CD8-positive, alpha-beta T cell (primary cell): ENCODE measurements at regions of chr17 and their contacts with region 1.

Region 1: GRCh38 chr17:42577532-42578281 is at the start of gene PSMC3IP:
- DNase-seq: peak; percentile 73 to 94 (median 91)
- ATAC-seq: peak; percentile 91
- H3K4me3 ChIP-seq: peak within 1 kb of the TSS; percentile 97 to 98
- H3K4me3 Mint-ChIP-seq: peak within 1 kb of the TSS; percentile 99
- H3K27ac ChIP-seq: peak within 1 kb of the TSS; percentile 76 to 88
- H3K27ac Mint-ChIP-seq: peak within 1 kb of the TSS; percentile 94
- H3K4me1 ChIP-seq: peaks cover 15% of the 10 kb centered on the region
- H3K4me1 Mint-ChIP-seq: peaks cover 29% of the 10 kb centered on the region
- H3K27me3 ChIP-seq: no peaks in the 10 kb centered on the region
- H3K27me3 Mint-ChIP-seq: no peaks in the 10 kb centered on the region
- CTCF ChIP-seq: no peak
- total RNA-seq, gene PSMC3IP: 3.9 to 4.1 TPM

Region 2: GRCh38 chr17:40827746-40828453 is 1749.8 kb before region 1 on chr17:
- CTCF ChIA-PET with region 1: no interaction called
- POLR2A ChIA-PET with region 1: no interaction called
- intact Hi-C with region 1: no loop called
- DNase-seq: no peak
- ATAC-seq: no peak
- H3K4me3 ChIP-seq: no peak overlapping the region
- H3K4me3 Mint-ChIP-seq: no peak overlapping the region
- H3K27ac ChIP-seq: no peak overlapping the region
- H3K27ac Mint-ChIP-seq: no peak overlapping the region
- H3K4me1 ChIP-seq: no peaks in the 10 kb centered on the region
- H3K4me1 Mint-ChIP-seq: peaks cover 13% of the 10 kb centered on the region
- H3K27me3 ChIP-seq: no peaks in the 10 kb centered on the region
- H3K27me3 Mint-ChIP-seq: peaks cover 2% of the 10 kb centered on the region
- CTCF ChIP-seq: no peak

Region 3: DNA sequence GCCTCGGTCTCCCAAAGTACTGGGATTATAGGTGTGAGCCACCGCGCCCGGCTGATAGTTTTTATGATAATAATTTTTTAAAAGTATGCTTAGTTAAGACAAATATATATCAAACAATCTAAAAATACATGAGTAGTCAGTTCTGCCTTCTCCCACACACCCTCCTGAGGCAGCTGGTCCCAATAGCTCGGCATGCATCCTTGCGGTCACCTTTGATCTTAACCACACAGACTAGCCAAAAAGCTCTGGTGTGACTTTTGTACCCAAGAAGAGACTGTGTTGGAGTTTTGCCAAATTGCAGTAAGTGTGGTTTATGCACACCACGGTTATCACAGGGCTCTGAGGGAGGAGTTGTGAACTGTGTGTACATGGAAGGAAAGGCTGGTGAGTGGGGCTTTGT is 93.4 kb before region 1 on chr17:
- CTCF ChIA-PET with region 1: no interaction called
- POLR2A ChIA-PET with region 1: no interaction called
- intact Hi-C with region 1: no loop called
- DNase-seq: peak; percentile 37 to 96 (median 70)
- ATAC-seq: peak; percentile 91
- H3K4me3 ChIP-seq: peak overlapping the region in 1 of 2 experiments; percentile 6
- H3K4me3 Mint-ChIP-seq: peak overlapping the region; percentile 51
- H3K27ac ChIP-seq: no peak overlapping the region
- H3K27ac Mint-ChIP-seq: peak overlapping the region; percentile 45
- H3K4me1 ChIP-seq: peaks cover 30% of the 10 kb centered on the region
- H3K4me1 Mint-ChIP-seq: peaks cover 38% of the 10 kb centered on the region
- H3K27me3 ChIP-seq: no peaks in the 10 kb centered on the region
- H3K27me3 Mint-ChIP-seq: no peaks in the 10 kb centered on the region
- CTCF ChIP-seq: no peak

Region 4: DNA sequence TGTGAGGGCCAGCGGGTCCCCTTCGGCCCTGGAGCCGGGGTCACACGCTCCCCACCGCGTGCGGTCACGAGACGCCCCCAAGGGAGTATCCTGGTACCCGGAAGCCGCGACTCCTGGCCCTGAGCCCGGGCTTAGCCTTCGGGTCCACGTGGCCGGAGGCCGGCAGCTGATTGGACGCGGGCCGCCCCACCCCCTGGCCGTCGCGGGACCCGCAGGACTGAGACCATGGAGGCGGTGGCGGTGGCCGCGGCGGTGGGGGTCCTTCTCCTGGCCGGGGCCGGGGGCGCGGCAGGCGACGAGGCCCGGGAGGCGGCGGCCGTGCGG is 41.7 kb before region 1 on chr17 and contains the start of gene NAGLU:
- CTCF ChIA-PET with region 1: interaction called, 18 read pairs
- POLR2A ChIA-PET with region 1: interaction called, 3 read pairs
- intact Hi-C with region 1: loop called (anchors 2 to 5 kb)
- DNase-seq: peak; percentile 47 to 89 (median 76)
- ATAC-seq: peak; percentile 69
- H3K4me3 ChIP-seq: peak within 1 kb of the TSS; percentile 56 to 82
- H3K4me3 Mint-ChIP-seq: peak within 1 kb of the TSS; percentile 87
- H3K27ac ChIP-seq: peak within 1 kb of the TSS; percentile 33 to 71
- H3K27ac Mint-ChIP-seq: peak within 1 kb of the TSS; percentile 87
- H3K4me1 ChIP-seq: peaks cover 38% of the 10 kb centered on the region
- H3K4me1 Mint-ChIP-seq: peaks cover 42% of the 10 kb centered on the region
- H3K27me3 ChIP-seq: no peaks in the 10 kb centered on the region
- H3K27me3 Mint-ChIP-seq: no peaks in the 10 kb centered on the region
- CTCF ChIP-seq: no peak
- total RNA-seq, gene NAGLU: 7.4 TPM

Region 5: DNA sequence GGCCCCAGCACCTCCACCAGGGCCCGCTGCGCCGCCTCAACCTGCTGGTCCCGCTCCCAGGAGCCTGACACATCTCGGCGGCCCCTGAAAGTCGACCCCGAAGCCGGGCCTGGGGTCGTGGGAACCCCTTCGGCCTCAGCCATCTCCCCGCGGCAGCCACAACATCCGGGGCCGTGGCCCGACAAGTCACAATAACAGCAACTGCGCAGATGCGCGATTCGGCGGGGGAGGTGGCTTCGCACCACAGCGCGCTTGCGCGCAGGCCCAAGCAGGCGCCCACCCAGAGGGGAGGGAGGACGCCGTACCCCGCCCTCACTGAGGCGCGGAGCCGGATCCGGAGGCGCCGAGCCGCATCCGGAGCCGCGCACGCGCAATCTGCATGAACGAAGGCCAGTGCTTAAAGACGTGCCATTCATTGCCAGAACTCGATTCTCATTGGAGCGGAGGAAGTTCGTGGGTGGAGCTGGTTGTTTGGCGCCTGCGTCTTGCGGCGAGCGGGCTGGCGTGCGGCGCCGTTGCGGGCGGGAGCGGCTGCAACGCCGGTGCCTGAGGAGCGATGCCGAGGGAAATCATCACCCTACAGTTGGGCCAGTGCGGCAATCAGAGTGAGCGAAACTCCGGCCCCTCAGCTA is 31.6 kb after region 1 on chr17 and contains the starts of genes RETREG3 and TUBG1:
- CTCF ChIA-PET with region 1: interaction called, 15 read pairs
- POLR2A ChIA-PET with region 1: interaction called, 26 read pairs
- intact Hi-C with region 1: loop called (anchors 1 kb)
- DNase-seq: peak; percentile 98 to 100 (median 99)
- ATAC-seq: peak; percentile 92
- H3K4me3 ChIP-seq: peak within 1 kb of the TSS; percentile 90 to 94
- H3K4me3 Mint-ChIP-seq: peak within 1 kb of the TSS; percentile 100
- H3K27ac ChIP-seq: peak within 1 kb of the TSS; percentile 90 to 91
- H3K27ac Mint-ChIP-seq: peak within 1 kb of the TSS; percentile 99
- H3K4me1 ChIP-seq: peaks cover 39% of the 10 kb centered on the region
- H3K4me1 Mint-ChIP-seq: peaks cover 48% of the 10 kb centered on the region
- H3K27me3 ChIP-seq: no peaks in the 10 kb centered on the region
- H3K27me3 Mint-ChIP-seq: no peaks in the 10 kb centered on the region
- CTCF ChIP-seq: no peak
- total RNA-seq, gene RETREG3: 59.0 to 59.3 TPM
- total RNA-seq, gene TUBG1: 4.9 to 8.4 TPM

Region 6: DNA sequence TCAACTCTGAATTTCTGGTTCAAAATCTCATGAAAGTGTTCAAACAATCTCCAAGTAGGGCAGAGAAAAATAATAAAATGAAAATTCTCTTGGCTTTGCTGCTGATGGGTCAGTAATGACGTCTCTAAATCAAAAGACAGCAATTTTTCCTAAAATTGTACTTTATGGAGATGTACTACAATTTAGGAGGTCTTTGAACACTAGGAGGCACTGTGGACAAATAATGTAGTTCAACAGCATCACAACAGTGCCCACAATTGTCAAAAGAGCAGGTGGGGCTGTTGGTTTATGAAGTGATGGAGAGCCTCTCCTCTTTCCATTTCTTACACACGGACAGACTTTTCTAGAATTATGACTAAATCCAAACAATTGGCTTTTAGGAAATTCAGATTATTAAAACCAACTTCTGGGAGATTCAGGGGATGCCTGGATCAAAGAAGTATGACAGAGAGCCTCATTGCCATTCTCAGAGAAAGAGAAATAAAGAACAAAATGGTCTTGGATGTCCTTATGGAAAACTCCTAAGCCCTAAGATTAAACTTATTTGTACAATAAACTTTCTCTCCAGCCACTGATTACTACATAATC is 143.4 kb after region 1 on chr17:
- CTCF ChIA-PET with region 1: interaction called, 13 read pairs
- POLR2A ChIA-PET with region 1: interaction called, 6 read pairs
- intact Hi-C with region 1: loop called in 1 of 2 experiments (anchors 5 kb)
- DNase-seq: peak in 5 of 9 experiments; percentile 17 to 79 (median 41)
- ATAC-seq: peak; percentile 89
- H3K4me3 ChIP-seq: no peak overlapping the region
- H3K4me3 Mint-ChIP-seq: no peak overlapping the region
- H3K27ac ChIP-seq: no peak overlapping the region
- H3K27ac Mint-ChIP-seq: no peak overlapping the region
- H3K4me1 ChIP-seq: no peaks in the 10 kb centered on the region
- H3K4me1 Mint-ChIP-seq: no peaks in the 10 kb centered on the region
- H3K27me3 ChIP-seq: no peaks in the 10 kb centered on the region
- H3K27me3 Mint-ChIP-seq: no peaks in the 10 kb centered on the region
- CTCF ChIP-seq: peak; percentile 66

Region 7: DNA sequence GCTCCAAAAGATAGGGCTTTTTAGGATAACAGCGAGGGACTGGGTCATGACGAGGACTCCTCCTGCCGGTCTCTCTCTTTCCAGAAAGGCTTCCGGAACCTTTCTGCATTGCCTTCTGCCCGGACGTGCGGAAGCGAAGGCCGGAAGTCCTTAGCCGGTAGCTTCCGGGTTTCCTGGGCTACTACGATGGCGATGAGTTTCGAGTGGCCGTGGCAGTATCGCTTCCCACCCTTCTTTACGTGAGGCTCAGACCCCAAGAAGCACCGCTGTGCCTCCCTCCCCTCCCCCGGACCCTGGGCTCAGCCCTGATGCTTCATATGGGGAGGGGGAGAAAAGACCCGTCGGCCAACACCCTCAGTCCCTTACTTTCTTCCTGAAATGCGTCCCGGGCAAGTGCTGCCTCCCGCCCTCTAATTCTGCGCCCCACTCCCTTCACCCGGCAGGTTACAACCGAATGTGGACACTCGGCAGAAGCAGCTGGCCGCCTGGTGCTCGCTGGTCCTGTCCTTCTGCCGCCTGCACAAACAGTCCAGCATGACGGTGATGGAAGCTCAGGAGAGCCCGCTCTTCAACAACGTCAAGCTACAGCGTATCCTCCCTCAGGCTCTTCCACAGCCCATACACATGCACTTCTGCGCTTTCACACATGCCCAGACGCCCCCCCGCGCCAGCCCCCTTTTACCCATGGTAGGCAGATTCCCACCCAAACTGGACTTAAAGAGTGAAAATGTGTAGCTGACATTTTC is 195.8 kb after region 1 on chr17 and contains the start of gene VPS25:
- CTCF ChIA-PET with region 1: interaction called, 4 read pairs
- POLR2A ChIA-PET with region 1: interaction called, 4 read pairs
- intact Hi-C with region 1: loop called in 1 of 2 experiments (anchors 1 kb)
- DNase-seq: peak; percentile 39 to 90 (median 75)
- ATAC-seq: peak; percentile 94
- H3K4me3 ChIP-seq: peak within 1 kb of the TSS; percentile 87 to 99
- H3K4me3 Mint-ChIP-seq: peak within 1 kb of the TSS; percentile 99
- H3K27ac ChIP-seq: peak within 1 kb of the TSS; percentile 89 to 93
- H3K27ac Mint-ChIP-seq: peak within 1 kb of the TSS; percentile 98
- H3K4me1 ChIP-seq: peaks cover 11% of the 10 kb centered on the region
- H3K4me1 Mint-ChIP-seq: peaks cover 28% of the 10 kb centered on the region
- H3K27me3 ChIP-seq: no peaks in the 10 kb centered on the region
- H3K27me3 Mint-ChIP-seq: peaks cover under 1% of the 10 kb centered on the region
- CTCF ChIP-seq: no peak
- total RNA-seq, gene VPS25: 41.0 to 45.1 TPM

Region 8: DNA sequence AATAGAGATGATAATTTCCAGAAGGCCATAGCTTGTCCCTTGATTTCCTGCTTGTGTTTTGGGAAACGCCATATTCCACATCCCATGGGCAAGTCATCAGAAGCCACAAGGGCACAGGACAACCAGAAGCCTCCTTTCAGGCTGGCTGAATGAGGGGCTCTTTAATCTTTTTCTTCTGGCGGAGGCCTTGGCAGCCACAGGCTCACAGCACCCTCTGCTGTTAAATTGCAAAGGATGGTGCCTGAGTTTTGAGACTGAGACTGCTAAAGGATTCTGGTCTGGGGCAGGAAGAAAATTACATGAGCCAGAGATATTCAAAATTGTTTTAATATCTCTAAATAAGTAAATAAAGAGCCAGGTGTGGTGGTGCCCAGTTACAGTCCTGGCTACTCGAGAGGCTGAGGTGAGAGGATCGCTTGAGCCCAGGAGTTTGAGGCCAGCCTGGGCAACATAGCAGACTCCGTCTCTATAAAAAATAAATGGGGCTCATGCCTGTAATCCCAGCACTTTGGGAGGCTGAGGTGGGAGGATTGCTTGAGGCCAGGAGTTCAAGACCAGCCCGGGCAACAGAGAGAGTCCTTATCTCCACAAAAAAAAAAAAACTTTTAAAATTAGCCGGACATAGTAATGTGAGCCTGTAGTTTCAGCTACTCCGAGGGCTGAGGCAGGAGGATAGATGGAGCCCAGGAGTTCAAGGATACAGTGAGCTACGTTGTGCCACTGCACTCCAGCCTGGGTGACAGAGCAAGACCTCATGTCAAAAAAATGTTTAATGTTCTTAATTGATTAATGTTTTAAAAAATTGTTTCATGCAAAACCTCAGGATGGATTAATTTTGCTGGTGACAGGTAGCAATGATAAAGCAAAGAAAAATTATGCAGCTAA is 360.2 kb after region 1 on chr17:
- CTCF ChIA-PET with region 1: no interaction called
- POLR2A ChIA-PET with region 1: no interaction called
- intact Hi-C with region 1: loop called in 1 of 2 experiments (anchors 5 kb)
- DNase-seq: peak in 6 of 9 experiments; percentile 0 to 47 (median 20)
- ATAC-seq: no peak
- H3K4me3 ChIP-seq: no peak overlapping the region
- H3K4me3 Mint-ChIP-seq: no peak overlapping the region
- H3K27ac ChIP-seq: no peak overlapping the region
- H3K27ac Mint-ChIP-seq: no peak overlapping the region
- H3K4me1 ChIP-seq: no peaks in the 10 kb centered on the region
- H3K4me1 Mint-ChIP-seq: no peaks in the 10 kb centered on the region
- H3K27me3 ChIP-seq: no peaks in the 10 kb centered on the region
- H3K27me3 Mint-ChIP-seq: peaks cover 11% of the 10 kb centered on the region
- CTCF ChIP-seq: peak; percentile 19